PC-9 (cell line): ENCODE measurements at regions of chr20 and their contacts with region 1.

Region 1: DNA sequence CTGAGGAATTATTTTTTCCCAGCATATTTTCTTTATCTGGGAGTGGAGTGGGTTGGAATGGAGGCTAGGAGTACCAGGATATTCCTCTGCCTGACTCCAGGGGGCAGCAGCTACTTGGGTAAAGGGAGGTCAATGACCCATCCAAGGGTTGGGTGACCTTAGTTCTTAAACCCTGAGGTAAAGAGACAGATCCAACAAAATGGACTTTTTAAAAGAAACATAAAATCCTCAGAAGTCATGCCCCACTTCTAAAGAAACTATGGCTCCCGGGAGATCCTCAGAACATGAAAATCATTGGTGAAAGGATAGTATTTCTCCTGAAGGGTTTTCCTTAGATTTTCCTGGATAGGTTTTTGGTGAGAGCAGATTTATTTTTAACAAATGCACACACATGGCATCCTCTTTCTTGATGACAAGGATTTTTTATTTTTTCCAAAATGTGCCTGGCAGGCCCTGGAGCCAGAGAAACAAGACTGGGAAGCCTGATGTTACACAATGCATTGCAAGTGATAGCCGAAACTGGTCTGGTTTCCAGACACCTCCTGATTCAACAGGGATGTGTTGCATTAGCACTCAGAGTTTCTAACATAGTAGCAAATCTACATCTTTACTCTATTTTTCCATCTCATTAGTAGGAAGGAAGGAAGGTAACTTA is 240.9 kb upstream of the BTBD3 start:
- DNase-seq: peak in 1 of 2 experiments; percentile 41
- H3K4me3 ChIP-seq: no peak overlapping the region
- H3K27ac ChIP-seq: no peak overlapping the region
- H3K4me1 ChIP-seq: no peaks in the 10 kb centered on the region
- H3K27me3 ChIP-seq: no peaks in the 10 kb centered on the region
- CTCF ChIP-seq: peak; percentile 94

Region 2: DNA sequence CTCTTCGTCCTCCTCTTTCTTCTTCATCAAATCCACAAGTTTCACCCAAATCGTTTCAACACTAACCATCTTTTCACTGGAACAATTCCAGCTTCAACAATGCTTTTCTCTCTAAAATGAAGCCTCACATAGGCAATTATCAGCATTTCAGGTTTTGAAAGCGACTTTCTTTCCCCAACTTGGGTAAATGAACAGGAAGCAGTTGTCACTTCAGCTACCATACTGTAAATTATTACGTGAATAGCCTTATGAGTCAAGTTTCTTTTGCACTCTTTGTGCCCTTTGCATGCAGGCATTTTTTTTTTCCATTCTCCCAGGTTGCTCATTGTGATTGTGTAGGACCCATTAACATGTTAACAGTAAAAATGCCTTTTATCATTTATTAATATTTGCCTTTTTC is 119.3 kb after region 1 on chr20:
- CTCF ChIA-PET with region 1: no interaction called
- POLR2A ChIA-PET with region 1: no interaction called
- intact Hi-C with region 1: loop called (anchors 10 kb)
- DNase-seq: no peak
- H3K4me3 ChIP-seq: no peak overlapping the region
- H3K27ac ChIP-seq: no peak overlapping the region
- H3K4me1 ChIP-seq: peaks cover 51% of the 10 kb centered on the region
- H3K27me3 ChIP-seq: no peaks in the 10 kb centered on the region
- CTCF ChIP-seq: no peak

Region 3: GRCh38 chr20:11849976-11850670 is 173.4 kb after region 1 on chr20:
- CTCF ChIA-PET with region 1: no interaction called
- POLR2A ChIA-PET with region 1: interaction called, 6 read pairs
- intact Hi-C with region 1: loop called (anchors 5 kb)
- DNase-seq: peak; percentile 16 to 47
- H3K4me3 ChIP-seq: no peak overlapping the region
- H3K27ac ChIP-seq: no peak overlapping the region
- H3K4me1 ChIP-seq: 0 out of 2 replicates have a peak, but pooled peaks cover 15% of the 10 kb centered on the region
- H3K27me3 ChIP-seq: no peaks in the 10 kb centered on the region
- CTCF ChIP-seq: no peak

Region 4: GRCh38 chr20:12243327-12243726 is 566.6 kb after region 1 on chr20:
- CTCF ChIA-PET with region 1: no interaction called
- POLR2A ChIA-PET with region 1: no interaction called
- intact Hi-C with region 1: no loop called
- DNase-seq: no peak
- H3K4me3 ChIP-seq: no peak overlapping the region
- H3K27ac ChIP-seq: no peak overlapping the region
- H3K4me1 ChIP-seq: no peaks in the 10 kb centered on the region
- H3K27me3 ChIP-seq: no peaks in the 10 kb centered on the region
- CTCF ChIP-seq: no peak